Right ventricle myocardium inferior (tissue), 1 donor: ENCODE measurements at regions of chr13 and their contacts with region 1.

Region 1: DNA sequence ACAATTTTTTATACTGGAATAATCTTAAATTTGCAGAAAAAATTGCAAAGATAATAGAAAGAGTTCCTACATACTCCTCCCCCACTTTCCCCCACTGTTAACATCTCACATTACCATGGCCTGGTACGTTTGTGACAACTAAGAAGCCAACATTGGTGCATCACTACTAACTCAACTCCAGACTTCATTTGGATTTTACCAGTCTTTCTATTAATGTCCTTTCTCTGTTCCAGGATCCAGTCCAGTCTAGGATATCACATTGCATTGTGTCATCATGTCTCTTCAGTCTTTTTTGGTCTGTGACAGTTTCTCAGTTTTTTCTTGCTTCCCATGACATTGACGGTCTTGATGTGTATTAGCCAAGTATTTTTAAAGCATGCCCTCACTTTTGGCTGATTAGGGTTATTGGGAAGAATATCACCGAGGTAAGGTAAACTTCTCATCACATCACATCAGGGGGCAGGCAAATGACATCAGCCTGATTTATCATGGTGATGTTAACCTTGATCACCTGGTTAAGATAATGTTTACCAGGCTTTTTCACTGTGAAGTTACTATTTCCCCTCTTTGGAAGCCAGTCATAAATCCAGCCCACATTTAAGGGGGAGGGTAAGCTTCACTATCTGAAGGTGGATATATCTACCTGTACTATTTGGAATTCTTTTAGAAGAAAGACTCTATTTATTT is 322.1 kb downstream of the ENOX1 start:
- DNase-seq: no peak
- ATAC-seq: no peak

Region 2: DNA sequence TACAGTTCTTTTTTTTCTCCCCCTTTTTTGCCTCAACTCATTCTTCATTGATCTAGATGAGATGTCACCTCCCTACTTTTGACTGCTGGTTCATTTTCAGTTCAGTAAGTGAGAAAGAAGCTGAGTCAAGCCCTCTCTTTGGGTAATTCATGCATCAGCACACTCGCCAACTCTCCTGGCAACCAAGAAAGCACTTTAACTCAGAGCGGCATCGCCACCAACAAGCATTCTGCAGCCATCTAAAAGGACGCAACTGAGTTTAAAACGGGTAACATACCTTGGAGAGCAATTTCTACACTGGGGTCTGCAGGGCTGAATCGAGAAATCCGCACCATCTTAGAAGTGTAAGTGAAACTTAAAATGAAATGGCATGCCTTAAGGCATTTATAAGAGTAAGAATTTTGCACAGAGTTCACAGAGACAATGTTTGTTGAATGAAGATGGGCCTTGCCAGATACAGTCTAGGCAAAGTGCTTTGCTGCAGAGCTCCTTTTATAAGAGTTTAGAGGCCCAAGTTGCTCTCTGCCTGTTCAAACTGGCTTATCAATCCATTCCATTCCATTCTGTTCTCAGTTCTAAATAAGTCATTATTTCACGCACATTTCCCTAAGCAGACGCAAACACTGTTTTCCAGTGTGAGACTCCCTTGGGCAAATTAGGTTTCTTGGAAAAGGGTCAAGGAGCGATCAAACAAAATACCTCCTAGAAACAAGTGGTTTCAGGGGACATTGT is 15.9 kb before region 1 on chr13:
- intact Hi-C with region 1: loop called (anchors 1 kb)
- DNase-seq: no peak
- ATAC-seq: no peak

Region 3: GRCh38 chr13:43546251-43546650 is 81.5 kb after region 1 on chr13:
- intact Hi-C with region 1: no loop called
- DNase-seq: no peak
- ATAC-seq: peak; percentile 78

Region 4: GRCh38 chr13:44396701-44397580 is 932.2 kb after region 1 on chr13:
- intact Hi-C with region 1: no loop called
- DNase-seq: no peak
- ATAC-seq: peak; percentile 88